ENCODE measurements at regions of chr11 and their contacts with region 1.

Region 1: DNA sequence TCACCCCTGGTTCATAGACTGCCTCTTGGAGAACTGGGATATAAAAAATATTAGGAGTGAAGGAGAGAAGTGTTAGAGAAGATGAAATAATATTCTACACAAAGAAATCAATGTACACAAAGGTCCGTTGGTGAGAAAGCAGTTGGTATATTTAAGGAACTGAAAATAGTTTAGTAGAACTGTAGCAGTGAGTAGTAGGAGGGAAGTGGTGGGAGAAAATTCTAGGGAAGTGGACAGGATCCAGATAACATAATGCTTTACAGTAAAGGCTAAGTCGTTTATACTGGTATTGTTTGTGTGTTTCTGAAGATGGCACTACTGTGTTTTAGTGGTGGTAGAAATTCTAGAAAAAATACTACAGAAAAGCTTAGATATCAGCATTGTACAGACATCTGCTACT is 120.8 kb upstream of the CHORDC1 start:
- DNase-seq: no peak
- H3K4me3 ChIP-seq: no peak overlapping the region
- H3K27ac ChIP-seq: no peak overlapping the region
- H3K4me1 ChIP-seq: no peaks in the 10 kb centered on the region
- H3K27me3 ChIP-seq: no peaks in the 10 kb centered on the region
- CTCF ChIP-seq: no peak

Region 2: GRCh38 chr11:89235976-89236375 is 1107.7 kb before region 1 on chr11:
- CTCF ChIA-PET with region 1: no interaction called
- POLR2A ChIA-PET with region 1: interaction called, 11 read pairs
- intact Hi-C with region 1: no loop called
- DNase-seq: no peak
- H3K4me3 ChIP-seq: no peak overlapping the region
- H3K27ac ChIP-seq: no peak overlapping the region
- H3K4me1 ChIP-seq: no peaks in the 10 kb centered on the region
- H3K27me3 ChIP-seq: no peaks in the 10 kb centered on the region
- CTCF ChIP-seq: no peak

Region 3: DNA sequence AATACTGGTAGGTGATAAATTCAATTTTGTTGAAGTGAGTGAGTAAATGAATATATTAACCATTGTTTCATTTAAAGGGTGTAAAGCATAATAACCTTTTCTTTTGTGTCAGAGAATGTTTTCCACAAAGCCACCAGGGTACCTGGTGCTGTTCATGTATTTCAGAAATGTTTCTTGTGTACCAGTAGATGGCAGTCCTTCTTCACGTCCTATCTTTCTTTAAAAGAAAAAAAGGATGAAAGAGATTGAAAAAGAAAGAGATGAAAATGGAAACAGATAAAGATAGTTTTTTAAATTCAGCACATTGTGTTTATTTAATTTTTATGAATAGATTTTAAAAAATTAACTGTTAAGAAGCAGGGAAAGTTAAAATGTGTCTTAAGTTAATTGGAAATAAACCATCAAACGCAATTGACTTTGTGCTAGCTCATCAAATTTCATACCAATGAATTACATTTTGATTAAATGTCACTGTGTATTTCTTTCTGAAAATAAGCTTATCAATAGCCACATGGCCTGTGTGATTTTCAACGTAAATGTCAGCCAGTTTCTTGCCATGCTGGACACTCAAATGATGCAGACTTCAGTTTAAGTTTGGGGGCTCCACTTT is 55.4 kb before region 1 on chr11:
- CTCF ChIA-PET with region 1: no interaction called
- POLR2A ChIA-PET with region 1: no interaction called
- intact Hi-C with region 1: no loop called
- DNase-seq: no peak
- H3K4me3 ChIP-seq: no peak overlapping the region
- H3K27ac ChIP-seq: no peak overlapping the region
- H3K4me1 ChIP-seq: no peaks in the 10 kb centered on the region
- H3K27me3 ChIP-seq: no peaks in the 10 kb centered on the region
- CTCF ChIP-seq: peak; percentile 79

Region 4: DNA sequence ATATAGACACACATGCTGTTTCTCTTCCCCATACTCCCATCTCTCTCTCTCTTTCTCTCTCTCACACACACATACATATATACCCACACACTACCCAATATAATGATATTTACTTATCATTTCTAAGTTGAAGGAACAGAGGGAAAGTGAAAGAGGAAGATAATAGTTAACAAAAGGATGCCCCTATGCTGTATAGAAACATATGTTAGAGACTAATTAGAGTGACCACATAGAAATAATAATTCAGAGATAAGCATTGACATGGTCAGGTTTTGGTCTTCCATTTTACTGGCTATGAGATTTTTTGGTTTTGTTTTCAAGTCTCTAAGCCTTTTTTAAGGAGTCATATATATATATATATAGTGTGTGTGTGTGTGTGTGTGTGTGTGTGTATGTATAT is 324.8 kb after region 1 on chr11:
- CTCF ChIA-PET with region 1: no interaction called
- POLR2A ChIA-PET with region 1: no interaction called
- intact Hi-C with region 1: no loop called
- DNase-seq: no peak
- H3K4me3 ChIP-seq: no peak overlapping the region
- H3K27ac ChIP-seq: no peak overlapping the region
- H3K4me1 ChIP-seq: no peaks in the 10 kb centered on the region
- H3K27me3 ChIP-seq: no peaks in the 10 kb centered on the region
- CTCF ChIP-seq: no peak

Measured in PC-9 (cell line).